ENCODE measurements at regions of chr10 and their contacts with region 1.

Region 1: DNA sequence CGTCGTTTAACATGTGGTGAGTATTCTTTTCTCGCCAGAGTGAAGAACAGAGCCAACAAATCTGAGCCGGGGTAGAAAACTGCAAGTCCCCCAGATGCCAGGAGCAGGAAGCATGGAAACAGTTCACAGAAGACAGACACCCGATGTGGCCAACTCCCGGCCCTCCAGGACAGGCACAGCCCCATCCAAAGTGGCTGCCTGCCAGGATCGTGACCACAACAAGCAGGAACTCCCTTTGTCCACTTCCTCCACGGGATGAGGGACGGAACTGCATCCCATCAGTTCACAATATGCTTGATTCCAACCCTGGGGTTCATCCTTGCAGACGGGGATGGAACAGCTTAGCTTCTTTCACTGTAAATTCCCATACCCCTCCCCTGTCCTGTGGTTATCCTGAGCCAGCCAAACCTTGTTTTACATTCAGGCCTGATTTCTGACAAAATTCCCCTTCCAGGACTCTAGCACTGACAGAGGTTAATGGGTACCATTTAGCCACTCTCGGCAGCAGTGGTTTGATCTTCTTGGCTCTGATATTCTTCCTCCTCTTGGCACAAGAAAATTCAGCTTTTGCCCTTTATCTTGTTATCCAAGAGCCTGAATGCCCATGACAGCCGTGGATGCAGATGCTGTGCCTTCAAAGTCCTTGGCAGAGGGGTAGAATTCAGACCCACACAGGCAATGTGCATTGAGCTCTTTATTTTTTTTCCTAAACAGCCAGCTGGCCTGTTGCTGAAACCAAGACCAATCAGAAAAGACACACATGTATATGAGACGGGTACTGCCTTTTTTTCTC is 105.5 kb upstream of the FAM204A start:
- DNase-seq: no peak
- H3K4me3 ChIP-seq: no peak overlapping the region
- H3K27ac ChIP-seq: no peak overlapping the region
- H3K4me1 ChIP-seq: no peaks in the 10 kb centered on the region
- H3K27me3 ChIP-seq: no peaks in the 10 kb centered on the region
- CTCF ChIP-seq: no peak
- POLR2A ChIP-seq: no peak

Region 2: DNA sequence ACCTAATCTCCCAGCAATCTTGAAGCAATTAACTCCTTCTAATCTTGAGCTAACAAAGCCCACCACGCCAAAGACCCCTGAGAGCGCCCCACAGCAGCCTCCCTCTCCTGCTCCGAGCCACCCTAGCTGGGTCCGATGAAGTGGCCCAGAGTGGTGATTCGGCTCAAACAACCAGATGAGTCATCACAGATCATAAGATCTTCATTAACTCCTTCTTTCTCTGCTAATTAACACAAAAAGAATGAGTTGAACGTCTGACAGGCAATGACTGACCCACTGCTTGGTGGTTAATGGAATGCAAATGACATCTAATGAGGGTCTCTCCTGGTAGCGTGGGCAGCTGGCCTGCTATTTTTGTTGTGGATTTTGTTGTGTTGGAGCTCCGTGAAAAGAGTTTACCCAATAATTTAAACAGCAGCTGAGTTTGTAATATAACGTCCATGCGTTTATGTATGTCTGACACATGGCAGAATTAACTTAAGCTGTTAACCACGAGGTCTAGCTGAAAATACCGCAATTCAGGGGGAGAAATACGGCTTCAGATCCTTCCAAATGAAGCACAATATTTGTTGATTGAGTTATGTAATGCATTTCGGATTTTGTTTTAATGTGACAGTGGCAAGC is 562.4 kb before region 1 on chr10:
- CTCF ChIA-PET with region 1: no interaction called
- POLR2A ChIA-PET with region 1: no interaction called
- dilution Hi-C with region 1: no loop called
- intact Hi-C with region 1: no loop called
- DNase-seq: no peak
- H3K4me3 ChIP-seq: no peak overlapping the region
- H3K27ac ChIP-seq: no peak overlapping the region
- H3K4me1 ChIP-seq: no peaks in the 10 kb centered on the region
- H3K27me3 ChIP-seq: no peaks in the 10 kb centered on the region
- CTCF ChIP-seq: no peak
- POLR2A ChIP-seq: no peak

Region 3: DNA sequence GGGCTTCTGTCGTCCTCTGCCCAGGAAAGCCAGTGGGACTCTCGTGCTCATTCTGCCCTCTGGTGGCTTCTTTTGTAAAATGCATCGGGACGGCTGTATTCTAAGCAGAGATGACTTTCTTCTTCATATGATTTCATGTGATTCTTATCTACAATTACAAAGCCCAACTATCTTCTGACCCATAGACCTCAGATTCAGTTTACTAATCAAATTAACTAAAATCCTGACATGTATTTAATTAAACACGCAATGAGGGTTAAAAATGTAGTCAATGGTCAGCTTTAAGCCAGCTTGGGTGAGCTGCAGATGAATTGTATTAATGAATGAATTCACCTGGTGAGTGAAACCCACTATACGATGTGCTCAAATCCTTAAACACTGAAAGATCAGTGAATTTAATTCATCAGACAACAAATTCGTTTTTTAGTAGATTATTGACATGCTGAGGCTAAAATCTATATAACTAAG is 12.1 kb after region 1 on chr10:
- CTCF ChIA-PET with region 1: interaction called, 17 read pairs
- POLR2A ChIA-PET with region 1: no interaction called
- dilution Hi-C with region 1: no loop called
- intact Hi-C with region 1: no loop called
- DNase-seq: peak; percentile 68
- H3K4me3 ChIP-seq: no peak overlapping the region
- H3K27ac ChIP-seq: no peak overlapping the region
- H3K4me1 ChIP-seq: no peaks in the 10 kb centered on the region
- H3K27me3 ChIP-seq: no peaks in the 10 kb centered on the region
- CTCF ChIP-seq: peak; percentile 67 to 80
- POLR2A ChIP-seq: no peak

Region 4: GRCh38 chr10:118481849-118482248 is 34.2 kb after region 1 on chr10:
- CTCF ChIA-PET with region 1: no interaction called
- POLR2A ChIA-PET with region 1: no interaction called
- dilution Hi-C with region 1: no loop called
- intact Hi-C with region 1: loop called (anchors 1 kb)
- DNase-seq: no peak
- H3K4me3 ChIP-seq: no peak overlapping the region
- H3K27ac ChIP-seq: no peak overlapping the region
- H3K4me1 ChIP-seq: no peaks in the 10 kb centered on the region
- H3K27me3 ChIP-seq: no peaks in the 10 kb centered on the region
- CTCF ChIP-seq: no peak
- POLR2A ChIP-seq: no peak

Region 5: DNA sequence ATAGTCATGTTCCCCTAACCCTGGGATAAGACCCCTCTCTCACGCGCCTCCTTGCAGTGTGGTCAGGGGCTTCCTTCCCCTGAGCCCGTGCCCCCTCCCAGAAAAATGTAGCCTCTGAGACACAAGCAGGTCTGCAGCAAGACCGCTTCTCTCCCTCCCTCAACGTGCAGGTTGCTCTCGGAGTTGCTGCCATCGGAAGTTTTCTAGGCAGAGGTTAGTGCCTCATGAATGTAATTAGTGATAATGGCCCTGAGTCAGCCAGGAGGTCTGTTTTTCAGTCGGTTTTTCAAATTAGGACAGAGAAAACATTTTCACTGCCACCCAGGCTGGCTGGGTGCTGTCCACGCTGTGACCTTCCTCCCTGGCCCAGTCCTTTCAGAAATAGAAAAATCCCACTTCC is 191.0 kb after region 1 on chr10:
- CTCF ChIA-PET with region 1: no interaction called
- POLR2A ChIA-PET with region 1: no interaction called
- dilution Hi-C with region 1: no loop called
- intact Hi-C with region 1: no loop called
- DNase-seq: no peak
- H3K4me3 ChIP-seq: no peak overlapping the region
- H3K27ac ChIP-seq: no peak overlapping the region
- H3K4me1 ChIP-seq: no peaks in the 10 kb centered on the region
- H3K27me3 ChIP-seq: no peaks in the 10 kb centered on the region
- CTCF ChIP-seq: no peak
- POLR2A ChIP-seq: no peak